Calu3 (cell line): ENCODE measurements at regions of chr15 and their contacts with region 1.

Region 1: DNA sequence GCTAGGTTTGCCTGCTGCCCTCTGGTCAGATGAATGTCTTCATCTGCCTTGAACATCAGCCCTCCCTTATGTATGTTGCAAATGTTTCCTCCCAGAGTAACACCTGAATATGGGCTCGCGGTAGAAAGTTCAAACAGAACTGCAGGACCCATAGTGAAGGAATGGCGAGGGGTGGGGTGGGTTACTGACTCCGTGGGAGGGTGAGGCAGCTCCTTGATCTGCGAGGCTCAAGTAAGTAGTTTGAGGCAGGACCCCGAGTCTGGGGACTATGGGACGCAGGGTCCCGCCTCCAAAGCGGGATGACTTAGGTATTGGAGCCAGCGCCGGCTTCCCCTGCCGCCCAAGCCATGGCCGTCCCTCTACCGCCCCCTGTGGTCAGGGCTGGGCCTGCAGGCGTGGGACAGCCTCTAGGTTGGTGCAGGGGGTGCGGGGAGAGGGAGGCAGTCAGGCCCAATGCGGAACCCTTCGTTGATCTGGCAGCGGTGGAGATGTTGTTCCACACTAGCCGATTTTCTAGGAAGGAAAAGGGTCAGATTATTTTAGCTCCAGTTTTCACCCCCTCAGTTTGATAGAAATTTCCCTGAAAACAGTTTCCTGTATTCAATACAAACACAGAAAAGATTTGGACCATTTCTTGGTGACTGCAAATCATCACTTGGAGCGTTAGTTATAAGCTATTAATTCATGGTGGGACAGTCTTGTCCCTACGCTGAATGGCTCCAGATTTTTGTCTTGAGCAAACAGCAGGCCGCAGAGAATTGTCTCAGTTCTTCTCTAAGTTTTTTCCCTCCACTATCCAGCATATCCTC is 72.3 kb downstream of the CORO2B start:
- DNase-seq: peak; percentile 91
- H3K4me3 Mint-ChIP-seq: no peak overlapping the region
- H3K27ac Mint-ChIP-seq: no peak overlapping the region
- H3K4me1 Mint-ChIP-seq: no peaks in the 10 kb centered on the region
- H3K27me3 Mint-ChIP-seq: peaks cover 52% of the 10 kb centered on the region
- CTCF ChIP-seq: peak; percentile 85

Region 2: DNA sequence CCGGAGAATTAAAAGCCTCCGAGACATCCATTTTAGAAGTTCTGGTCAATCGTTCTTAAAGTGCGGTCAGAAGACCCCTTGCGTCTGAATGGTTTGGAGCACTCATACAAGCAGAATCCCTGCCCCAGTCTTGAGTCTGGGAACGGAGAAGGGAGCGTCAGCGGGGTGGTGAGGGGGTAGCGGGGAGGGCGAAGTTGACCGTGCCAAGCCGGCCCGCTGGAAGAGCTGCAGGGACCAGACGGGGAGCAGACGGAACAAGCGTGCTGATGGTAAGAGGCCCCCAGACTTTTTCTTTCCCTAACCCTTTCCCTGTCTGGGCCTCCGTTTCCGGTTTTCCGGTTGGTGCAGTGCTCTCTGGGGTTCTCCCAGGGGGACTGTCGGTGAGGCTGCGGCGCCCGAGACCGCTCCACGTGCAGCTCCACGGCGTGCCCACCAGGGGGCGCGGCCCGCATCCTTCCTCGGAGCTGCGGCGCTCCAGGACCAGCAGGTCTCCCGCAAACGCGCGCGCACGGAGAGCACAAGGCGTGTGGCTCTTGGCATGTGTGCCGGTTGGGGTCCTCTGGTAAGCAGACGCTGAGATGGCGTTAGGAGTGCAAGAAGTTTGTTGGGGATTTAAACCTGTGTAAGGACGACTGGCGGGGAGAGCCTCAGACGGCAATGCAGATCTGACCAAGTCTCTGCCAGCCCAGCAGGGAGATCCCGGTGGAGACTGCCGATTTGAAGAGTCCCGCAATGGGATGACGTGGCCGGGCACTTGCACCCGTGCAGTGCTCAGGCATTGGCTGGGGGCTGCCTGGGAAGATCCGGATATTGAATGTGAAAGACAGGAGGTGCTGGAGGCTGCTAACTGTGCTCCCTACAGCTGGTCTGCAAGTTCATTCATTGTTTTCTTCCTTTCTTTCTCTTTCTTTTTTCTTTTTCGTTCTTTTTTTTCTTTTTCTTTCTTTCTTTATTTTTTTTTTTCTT is 91.5 kb before region 1 on chr15:
- CTCF ChIA-PET with region 1: no interaction called
- intact Hi-C with region 1: loop called (anchors 1 kb)
- DNase-seq: peak; percentile 90
- H3K4me3 Mint-ChIP-seq: peak overlapping the region; percentile 78
- H3K27ac Mint-ChIP-seq: no peak overlapping the region
- H3K4me1 Mint-ChIP-seq: peaks cover 23% of the 10 kb centered on the region
- H3K27me3 Mint-ChIP-seq: peaks cover 90% of the 10 kb centered on the region
- CTCF ChIP-seq: peak; percentile 91

Region 3: GRCh38 chr15:69244798-69245197 is 593.7 kb after region 1 on chr15:
- CTCF ChIA-PET with region 1: no interaction called
- intact Hi-C with region 1: no loop called
- DNase-seq: no peak
- H3K4me3 Mint-ChIP-seq: no peak overlapping the region
- H3K27ac Mint-ChIP-seq: no peak overlapping the region
- H3K4me1 Mint-ChIP-seq: no peaks in the 10 kb centered on the region
- H3K27me3 Mint-ChIP-seq: no peaks in the 10 kb centered on the region
- CTCF ChIP-seq: no peak